ENCODE measurements at regions of chr11 and their contacts with region 1.

Region 1: GRCh38 chr11:44727373-44728287 is 868 bp downstream of the TSPAN18 start:
- DNase-seq: peak; percentile 54 to 94 (median 77)
- ATAC-seq: peak; percentile 90 to 96 (median 94)
- H3K4me3 ChIP-seq: peak overlapping the region; percentile 24 to 69 (median 42)
- H3K27ac ChIP-seq: no peak overlapping the region
- H3K4me1 ChIP-seq: peaks cover 0 to 4% (median 0%) of the 10 kb centered on the region in 3 donors
- H3K27me3 ChIP-seq: no peaks in the 10 kb centered on the region
- CTCF ChIP-seq: peak; percentile 84 to 95 (median 94)

Region 2: GRCh38 chr11:44379141-44380008 is 348.3 kb before region 1 on chr11:
- intact Hi-C with region 1: no loop called
- DNase-seq: no peak
- ATAC-seq: no peak
- H3K4me3 ChIP-seq: no peak overlapping the region
- H3K27ac ChIP-seq: no peak overlapping the region
- H3K4me1 ChIP-seq: no peaks in the 10 kb centered on the region
- H3K27me3 ChIP-seq: no peaks in the 10 kb centered on the region
- CTCF ChIP-seq: no peak

Region 3: DNA sequence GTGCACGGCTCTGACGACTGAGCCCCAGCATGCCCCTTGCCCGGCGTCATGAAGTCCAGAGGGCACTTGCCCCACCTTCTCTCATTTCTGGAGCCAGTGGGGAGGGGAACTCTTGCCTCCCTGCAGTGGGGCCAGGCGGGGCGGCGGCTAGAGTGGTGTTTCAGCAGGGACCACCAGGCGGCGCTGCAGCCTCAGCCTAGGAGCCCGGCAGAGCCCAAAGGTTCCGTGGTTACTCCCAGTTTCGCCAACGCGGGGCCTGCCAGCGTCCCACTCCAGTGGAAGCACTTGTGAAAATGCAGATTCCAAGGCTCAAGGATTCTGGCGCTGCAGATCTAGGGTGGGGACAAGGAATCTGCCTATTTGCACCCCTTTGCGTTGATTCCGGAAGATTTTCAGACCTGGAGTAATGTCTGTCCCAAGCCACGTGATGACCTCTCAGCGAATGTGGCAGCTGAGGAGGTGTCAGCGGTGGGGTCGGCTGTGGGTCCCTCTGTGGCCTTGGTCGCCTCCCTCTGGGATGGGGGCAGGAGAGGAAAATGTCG is 106.4 kb before region 1 on chr11:
- intact Hi-C with region 1: no loop called
- DNase-seq: peak in 5 of 6 donors; percentile 35 to 87 (median 58)
- ATAC-seq: peak; percentile 49 to 85 (median 75)
- H3K4me3 ChIP-seq: no peak overlapping the region
- H3K27ac ChIP-seq: no peak overlapping the region
- H3K4me1 ChIP-seq: no peaks in the 10 kb centered on the region
- H3K27me3 ChIP-seq: no peaks in the 10 kb centered on the region
- CTCF ChIP-seq: peak; percentile 72 to 83 (median 78)

Region 4: DNA sequence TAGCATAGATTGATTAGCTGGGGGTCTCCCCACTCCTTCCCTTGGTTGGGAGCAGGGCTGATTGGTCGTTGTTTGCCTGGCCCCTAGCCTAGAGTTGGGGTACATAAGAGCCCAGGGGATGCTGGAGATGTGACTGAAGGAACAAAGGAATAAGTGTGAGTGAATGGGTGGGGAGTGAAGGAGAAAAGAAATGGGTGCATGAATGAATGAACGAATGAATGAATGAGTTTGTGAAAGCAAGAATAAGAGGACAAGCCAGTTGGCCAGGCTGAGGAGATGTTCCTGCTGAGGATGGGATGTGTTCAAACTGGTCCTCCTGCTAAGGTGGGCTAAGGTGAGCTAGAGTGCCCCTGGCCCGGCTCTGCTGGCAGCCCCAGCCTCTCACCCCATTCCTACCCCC is 61.8 kb before region 1 on chr11:
- intact Hi-C with region 1: loop called in 1 of 3 experiments (anchors 5 kb)
- DNase-seq: no peak
- ATAC-seq: no peak
- H3K4me3 ChIP-seq: no peak overlapping the region
- H3K27ac ChIP-seq: no peak overlapping the region
- H3K4me1 ChIP-seq: no peaks in the 10 kb centered on the region
- H3K27me3 ChIP-seq: no peaks in the 10 kb centered on the region
- CTCF ChIP-seq: no peak

Region 5: GRCh38 chr11:44886790-44887140 is 159.1 kb after region 1 on chr11:
- intact Hi-C with region 1: loop called in 2 of 3 experiments (anchors 10 kb)
- DNase-seq: no peak
- ATAC-seq: peak in 2 of 4 donors; percentile 22 to 43
- H3K4me3 ChIP-seq: no peak overlapping the region
- H3K27ac ChIP-seq: no peak overlapping the region
- H3K4me1 ChIP-seq: no peaks in the 10 kb centered on the region
- H3K27me3 ChIP-seq: no peaks in the 10 kb centered on the region
- CTCF ChIP-seq: no peak

Region 6: GRCh38 chr11:44893846-44894617 is 166.4 kb after region 1 on chr11:
- intact Hi-C with region 1: loop called in 2 of 3 experiments (anchors 10 kb)
- DNase-seq: peak in 4 of 6 donors; percentile 29 to 74 (median 54)
- ATAC-seq: peak in 3 of 4 donors; percentile 70 to 82 (median 80)
- H3K4me3 ChIP-seq: no peak overlapping the region
- H3K27ac ChIP-seq: no peak overlapping the region
- H3K4me1 ChIP-seq: no peaks in the 10 kb centered on the region
- H3K27me3 ChIP-seq: no peaks in the 10 kb centered on the region
- CTCF ChIP-seq: peak in 3 of 4 donors; percentile 35 to 66 (median 47)

Region 7: GRCh38 chr11:44911029-44911814 is 183.6 kb after region 1 on chr11:
- intact Hi-C with region 1: loop called in 1 of 3 experiments (anchors 5 kb)
- DNase-seq: peak in 5 of 6 donors; percentile 70 to 88 (median 78)
- ATAC-seq: peak; percentile 86 to 95 (median 92)
- H3K4me3 ChIP-seq: no peak overlapping the region
- H3K27ac ChIP-seq: no peak overlapping the region
- H3K4me1 ChIP-seq: no peaks in the 10 kb centered on the region
- H3K27me3 ChIP-seq: no peaks in the 10 kb centered on the region
- CTCF ChIP-seq: peak; percentile 74 to 91 (median 88)